Activated CD8-positive, alpha-beta T cell treated with anti-CD3 and anti-CD28 coated beads for 36 hours (primary cell): ENCODE measurements at regions of chr10 and their contacts with region 1.

Region 1: DNA sequence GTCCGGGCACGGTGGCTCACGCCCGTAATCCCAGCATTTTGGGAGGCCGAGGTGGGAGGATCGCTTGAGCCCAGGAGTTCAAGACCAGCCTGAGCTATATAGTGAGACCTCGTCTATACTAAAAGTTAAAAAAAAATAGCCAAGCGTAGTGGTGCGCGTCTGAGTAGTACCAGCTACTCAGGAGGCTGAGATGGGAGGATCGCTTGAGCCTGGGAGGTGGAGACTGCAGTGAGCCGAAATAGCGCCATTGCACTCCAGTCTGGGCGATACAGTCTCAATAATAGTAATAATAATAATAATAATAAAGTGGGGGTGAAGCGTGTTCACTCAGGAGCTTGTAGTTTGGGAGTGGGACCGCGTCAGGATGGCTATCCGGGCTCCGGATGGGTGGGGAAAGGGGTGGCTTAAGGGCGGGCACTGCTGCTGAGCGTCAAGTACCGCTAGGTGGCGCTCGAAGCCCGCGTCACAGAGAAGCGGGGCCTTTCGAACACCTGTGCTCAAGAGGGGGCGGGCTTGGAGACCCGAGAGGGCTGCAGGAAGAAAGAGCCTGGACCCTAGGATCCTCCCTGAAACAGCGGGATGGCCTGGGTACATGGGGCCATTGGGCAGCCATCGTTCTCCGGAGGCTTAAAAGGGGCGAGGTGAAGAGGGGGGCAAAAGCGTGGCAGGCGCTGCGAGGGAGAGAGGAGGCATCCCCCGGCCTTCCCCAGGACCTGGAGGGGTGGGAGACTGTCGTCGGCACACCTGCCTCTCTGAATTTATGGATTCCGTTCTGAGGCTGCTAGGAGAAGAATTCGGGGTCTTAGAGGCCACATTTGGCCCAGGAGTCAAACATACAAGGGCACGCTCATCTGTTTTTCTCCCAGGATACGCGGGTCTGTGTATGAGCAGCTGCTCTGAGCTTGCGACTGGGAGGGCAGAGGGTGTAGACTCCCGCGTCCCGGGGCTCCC is 14.5 kb downstream of the LBX1 start:
- DNase-seq: peak; percentile 84
- ATAC-seq: peak; percentile 79
- H3K4me3 Mint-ChIP-seq: peak overlapping the region; percentile 42
- H3K27ac Mint-ChIP-seq: no peak overlapping the region
- H3K4me1 Mint-ChIP-seq: peaks cover 27% of the 10 kb centered on the region
- H3K27me3 Mint-ChIP-seq: peaks cover 75% of the 10 kb centered on the region
- CTCF ChIP-seq: peak; percentile 95

Region 2: GRCh38 chr10:101228153-101228973 is 13.6 kb after region 1 on chr10:
- CTCF ChIA-PET with region 1: interaction called, 75 read pairs
- POLR2A ChIA-PET with region 1: interaction called, 6 read pairs
- intact Hi-C with region 1: no loop called
- DNase-seq: no peak
- ATAC-seq: no peak
- H3K4me3 Mint-ChIP-seq: no peak overlapping the region
- H3K27ac Mint-ChIP-seq: no peak overlapping the region
- H3K4me1 Mint-ChIP-seq: peaks cover 33% of the 10 kb centered on the region
- H3K27me3 Mint-ChIP-seq: peaks cover 74% of the 10 kb centered on the region
- CTCF ChIP-seq: no peak

Region 3: DNA sequence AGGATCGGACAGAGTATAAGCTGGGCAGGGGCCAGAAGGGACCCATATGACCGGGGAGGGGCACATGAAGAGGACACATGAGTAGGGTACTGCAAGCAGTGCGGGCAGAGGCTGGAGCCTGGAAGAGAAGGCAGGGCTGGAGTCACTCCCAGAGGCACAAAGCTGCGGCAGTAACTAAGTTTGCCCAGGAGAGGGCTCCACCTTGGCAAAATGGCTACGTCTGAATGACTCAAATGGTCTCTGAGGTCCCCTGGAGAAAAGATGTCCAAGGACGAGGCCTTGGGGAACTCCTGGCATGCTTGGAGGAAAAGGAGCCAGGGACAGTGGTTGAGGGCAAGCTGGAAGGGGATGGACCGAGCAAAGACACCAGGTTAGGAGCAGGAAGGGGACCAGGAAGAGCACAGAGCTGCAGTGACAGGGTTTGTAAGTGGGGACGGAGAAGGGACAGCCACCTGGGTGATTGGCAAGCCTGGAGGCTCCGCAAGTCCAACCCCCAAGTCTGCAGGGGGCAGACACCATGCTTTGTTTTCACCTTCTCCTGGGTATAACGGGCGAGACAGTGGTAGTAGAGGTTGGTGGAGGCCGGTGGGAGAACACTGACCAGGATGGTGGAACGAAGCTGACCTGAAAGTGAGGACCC is 57.6 kb after region 1 on chr10:
- CTCF ChIA-PET with region 1: interaction called, 17 read pairs
- POLR2A ChIA-PET with region 1: no interaction called
- intact Hi-C with region 1: no loop called
- DNase-seq: peak; percentile 73
- ATAC-seq: peak; percentile 93
- H3K4me3 Mint-ChIP-seq: no peak overlapping the region
- H3K27ac Mint-ChIP-seq: no peak overlapping the region
- H3K4me1 Mint-ChIP-seq: peaks cover 2% of the 10 kb centered on the region
- H3K27me3 Mint-ChIP-seq: peaks cover 20% of the 10 kb centered on the region
- CTCF ChIP-seq: peak; percentile 80

Region 4: DNA sequence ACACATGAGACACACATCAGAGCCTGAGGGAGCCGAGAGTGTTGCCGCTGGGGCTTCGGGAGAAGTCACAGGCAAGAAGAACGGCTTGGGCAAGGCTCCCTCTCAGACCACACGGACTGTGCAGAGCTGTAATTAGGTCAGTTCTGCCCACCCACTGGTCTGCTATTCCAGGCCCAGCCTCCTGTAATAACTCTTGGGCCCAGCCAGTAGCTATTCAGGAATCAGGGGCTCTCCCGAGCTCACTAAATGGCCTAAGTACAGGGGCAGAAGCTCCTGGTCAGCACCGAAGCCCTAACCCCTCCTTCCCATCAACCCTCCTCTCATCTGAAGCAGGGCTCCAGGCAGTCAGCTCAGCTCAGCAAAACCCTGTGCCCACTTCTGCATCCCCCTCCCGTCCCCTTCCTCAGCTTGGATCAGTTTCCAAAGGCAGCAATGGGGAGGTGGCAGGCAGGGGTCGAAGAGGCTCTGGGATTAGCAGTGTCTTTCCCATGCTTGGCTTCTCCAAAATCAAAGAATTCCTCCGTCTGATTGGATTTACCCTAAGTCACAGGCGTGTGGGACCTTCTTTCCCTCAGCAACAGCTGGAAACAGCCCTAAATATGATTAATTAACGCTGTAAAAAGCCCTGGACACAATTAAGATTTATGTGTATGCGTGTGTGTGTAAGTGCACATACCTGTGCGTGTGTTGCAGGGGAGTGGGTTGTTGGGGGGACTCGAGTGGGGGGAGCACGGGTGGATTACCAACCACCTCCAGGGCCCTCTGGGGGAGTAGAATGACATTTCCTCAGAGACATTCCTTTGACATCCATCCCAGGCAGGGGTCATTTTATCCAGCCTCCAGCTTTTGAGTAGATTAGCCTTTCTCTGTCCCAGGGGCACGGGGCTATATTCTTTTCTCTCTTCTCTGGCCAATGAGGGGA is 90.9 kb after region 1 on chr10:
- CTCF ChIA-PET with region 1: interaction called, 16 read pairs
- POLR2A ChIA-PET with region 1: no interaction called
- intact Hi-C with region 1: no loop called
- DNase-seq: no peak
- ATAC-seq: no peak
- H3K4me3 Mint-ChIP-seq: no peak overlapping the region
- H3K27ac Mint-ChIP-seq: no peak overlapping the region
- H3K4me1 Mint-ChIP-seq: peaks cover 1% of the 10 kb centered on the region
- H3K27me3 Mint-ChIP-seq: peaks cover 30% of the 10 kb centered on the region
- CTCF ChIP-seq: no peak

Region 5: GRCh38 chr10:101467286-101467770 is 252.6 kb after region 1 on chr10:
- CTCF ChIA-PET with region 1: interaction called, 36 read pairs
- POLR2A ChIA-PET with region 1: no interaction called
- intact Hi-C with region 1: loop called (anchors 5 kb)
- DNase-seq: peak; percentile 29
- ATAC-seq: peak; percentile 88
- H3K4me3 Mint-ChIP-seq: no peak overlapping the region
- H3K27ac Mint-ChIP-seq: no peak overlapping the region
- H3K4me1 Mint-ChIP-seq: peaks cover 8% of the 10 kb centered on the region
- H3K27me3 Mint-ChIP-seq: no peaks in the 10 kb centered on the region
- CTCF ChIP-seq: peak; percentile 75

Region 6: GRCh38 chr10:101569838-101570766 is 355.4 kb after region 1 on chr10:
- CTCF ChIA-PET with region 1: interaction called, 73 read pairs
- POLR2A ChIA-PET with region 1: interaction called, 7 read pairs
- intact Hi-C with region 1: loop called (anchors 5 kb)
- DNase-seq: peak; percentile 84
- ATAC-seq: peak; percentile 84
- H3K4me3 Mint-ChIP-seq: peak overlapping the region; percentile 72
- H3K27ac Mint-ChIP-seq: no peak overlapping the region
- H3K4me1 Mint-ChIP-seq: peaks cover 16% of the 10 kb centered on the region
- H3K27me3 Mint-ChIP-seq: peaks cover 39% of the 10 kb centered on the region
- CTCF ChIP-seq: peak; percentile 88